AG04449 (cell line): ENCODE measurements at regions of chr5 and their contacts with region 1.

Region 1: DNA sequence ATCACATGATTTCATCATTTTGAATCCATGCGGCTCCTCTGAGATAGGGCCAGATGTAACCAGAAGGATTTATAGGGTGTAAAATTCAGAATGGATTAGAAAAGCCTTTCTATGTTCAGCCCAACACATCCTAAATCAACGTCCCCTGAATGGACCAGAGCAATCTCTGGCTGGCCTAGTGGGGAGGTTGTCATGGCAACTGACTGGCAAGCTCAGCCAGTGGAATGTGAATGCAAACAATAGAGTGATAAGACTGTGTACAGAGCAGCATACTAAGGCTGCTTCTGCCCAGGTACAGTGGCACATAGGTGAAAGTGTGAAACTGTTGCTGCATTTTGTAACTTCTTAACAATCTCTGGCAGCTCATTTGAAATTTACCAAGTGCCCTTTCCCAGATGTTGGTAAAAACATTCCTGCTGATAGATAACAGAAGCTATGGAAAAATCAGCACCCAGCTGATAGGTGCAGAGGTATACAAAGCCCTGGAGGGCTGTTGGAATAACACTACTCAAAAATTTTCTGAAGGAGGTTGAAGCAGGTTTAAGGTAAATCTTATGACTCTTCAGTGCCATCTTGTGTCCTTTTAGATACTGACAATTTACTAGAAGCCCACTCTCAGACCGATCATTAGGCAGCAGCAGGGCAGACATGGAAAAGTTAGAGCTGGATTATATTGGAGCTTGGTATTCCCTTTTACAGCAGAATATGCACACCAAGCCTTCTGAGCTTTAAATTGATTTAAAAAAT is 267.2 kb downstream of the RAB3C start:
- DNase-seq: no peak
- H3K4me3 ChIP-seq: no peak overlapping the region
- CTCF ChIP-seq: peak; percentile 33

Region 2: DNA sequence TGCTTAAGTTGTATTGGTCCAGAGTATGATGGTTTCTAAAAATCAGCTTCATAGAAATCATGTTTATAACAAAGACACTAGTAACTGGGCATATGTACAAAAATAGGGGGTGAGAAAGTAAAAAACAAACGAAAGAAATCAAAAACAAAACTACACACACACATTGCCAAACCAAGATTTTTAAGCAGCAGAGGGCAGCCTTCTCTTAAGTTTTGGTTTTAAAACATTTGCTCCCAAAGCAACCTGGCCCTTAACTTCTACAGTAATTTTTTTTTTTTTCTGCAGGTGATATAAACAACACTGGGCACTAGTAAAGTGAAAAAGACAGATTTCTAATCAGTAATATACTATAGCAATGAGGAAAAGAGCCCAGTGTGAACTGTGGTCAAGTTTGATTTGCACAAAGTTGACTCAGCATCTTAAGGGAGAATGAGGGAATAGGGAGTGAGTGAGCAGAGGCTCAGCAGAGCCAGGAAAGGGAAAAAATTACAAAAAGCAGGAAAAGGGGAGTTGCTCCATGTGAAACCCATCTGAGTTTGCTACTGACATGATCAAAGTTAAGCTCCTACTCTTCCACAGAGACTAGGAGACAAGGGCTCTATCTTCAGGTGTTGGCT is 372.2 kb before region 1 on chr5:
- CTCF ChIA-PET with region 1: interaction called, 31 read pairs
- POLR2A ChIA-PET with region 1: no interaction called
- DNase-seq: no peak
- H3K4me3 ChIP-seq: no peak overlapping the region
- CTCF ChIP-seq: no peak

Region 3: DNA sequence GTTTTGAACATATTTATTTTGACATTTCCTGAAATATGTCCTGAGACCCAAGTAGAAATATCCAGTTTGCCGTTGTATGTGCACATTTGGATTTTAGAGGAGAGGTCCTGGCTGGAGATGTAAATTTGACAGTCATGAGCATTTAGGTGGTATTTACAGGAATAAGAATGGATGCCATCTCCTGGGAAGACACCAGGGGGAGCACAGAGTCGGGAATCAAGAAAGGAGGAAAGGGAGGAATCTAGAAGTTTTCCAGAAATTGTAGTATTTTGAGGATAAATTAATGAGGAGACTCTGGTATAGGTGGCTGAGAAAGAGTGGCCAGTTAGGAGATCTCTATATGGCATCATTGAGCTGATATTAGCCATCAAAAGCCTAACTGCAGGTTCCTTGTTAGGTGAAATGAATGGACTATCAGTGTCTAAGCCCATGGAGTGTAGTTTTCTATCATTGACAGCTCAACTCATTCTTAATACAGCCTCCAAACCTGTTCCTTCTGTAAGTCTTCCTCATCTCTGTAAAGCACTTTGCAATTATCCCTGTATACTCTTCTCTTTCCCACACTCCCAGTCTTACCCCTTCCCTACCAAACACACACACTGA is 351.7 kb before region 1 on chr5:
- CTCF ChIA-PET with region 1: interaction called, 202 read pairs
- POLR2A ChIA-PET with region 1: no interaction called
- DNase-seq: no peak
- H3K4me3 ChIP-seq: no peak overlapping the region
- CTCF ChIP-seq: peak; percentile 75

Region 4: DNA sequence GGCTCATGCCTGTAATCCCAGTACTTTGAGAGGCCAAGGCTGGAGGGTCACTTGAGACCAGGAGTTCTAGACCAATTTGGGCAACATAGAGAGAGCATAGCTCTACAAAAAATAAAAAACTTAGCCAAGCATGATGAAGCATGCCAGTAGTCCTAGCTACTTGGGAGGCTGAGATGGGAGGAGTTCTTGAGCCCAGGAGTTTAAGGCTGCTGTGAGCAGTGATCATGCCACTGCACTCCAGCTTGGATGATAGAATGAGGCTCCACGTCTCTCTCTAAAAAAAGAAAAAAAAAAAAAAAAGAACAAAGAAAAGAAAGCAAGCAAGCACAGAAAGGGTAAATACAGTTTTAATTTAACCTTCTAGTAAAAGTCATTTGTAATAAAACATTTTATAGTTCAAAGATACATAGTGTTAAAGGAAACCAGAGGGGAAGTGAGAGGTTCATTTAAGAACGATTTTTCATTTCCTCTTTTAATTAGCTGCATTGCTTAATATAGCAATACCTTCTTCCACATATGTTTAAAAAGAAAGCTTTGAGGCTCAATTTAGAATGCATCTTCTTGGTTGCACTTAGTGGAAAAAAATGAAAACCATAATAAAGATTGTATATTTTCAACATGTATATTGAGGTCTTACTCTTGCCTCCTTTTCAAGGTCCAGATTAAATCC is 344.0 kb before region 1 on chr5:
- CTCF ChIA-PET with region 1: interaction called, 202 read pairs
- POLR2A ChIA-PET with region 1: no interaction called
- DNase-seq: no peak
- H3K4me3 ChIP-seq: no peak overlapping the region
- CTCF ChIP-seq: no peak

Region 5: GRCh38 chr5:58860680-58861079 is 10.6 kb after region 1 on chr5:
- CTCF ChIA-PET with region 1: interaction called, 10 read pairs
- POLR2A ChIA-PET with region 1: no interaction called
- DNase-seq: no peak
- H3K4me3 ChIP-seq: no peak overlapping the region
- CTCF ChIP-seq: no peak

Region 6: DNA sequence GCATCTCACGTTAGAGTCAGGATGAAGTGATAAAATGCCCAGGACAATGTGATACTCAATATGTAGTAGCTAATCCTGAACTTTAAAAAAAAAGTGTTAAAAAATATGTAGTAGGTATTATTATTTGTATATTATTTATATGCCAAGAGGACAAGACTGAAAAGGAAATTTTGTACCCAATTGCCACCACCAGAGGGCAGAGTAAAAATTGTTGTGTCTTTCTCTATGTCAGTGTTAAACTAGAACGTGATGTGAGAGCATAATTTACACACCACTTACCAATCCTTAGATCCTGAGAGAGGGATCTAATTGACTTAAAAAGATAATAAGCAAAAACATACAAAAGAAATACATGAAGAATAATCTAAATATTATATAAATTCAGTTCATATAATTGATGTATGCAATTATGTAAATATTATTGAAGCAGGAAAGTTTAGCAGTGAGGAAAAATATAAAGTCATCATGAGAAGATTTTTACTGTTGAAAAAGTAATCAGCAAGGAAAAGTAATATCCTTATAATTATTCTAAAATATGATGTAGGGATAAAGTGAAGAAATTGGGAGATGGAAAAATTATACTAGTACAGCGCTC is 21.7 kb after region 1 on chr5:
- CTCF ChIA-PET with region 1: interaction called, 13 read pairs
- POLR2A ChIA-PET with region 1: no interaction called
- DNase-seq: no peak
- H3K4me3 ChIP-seq: no peak overlapping the region
- CTCF ChIP-seq: peak; percentile 61

Region 7: GRCh38 chr5:58898538-58898937 is 48.4 kb after region 1 on chr5:
- CTCF ChIA-PET with region 1: no interaction called
- POLR2A ChIA-PET with region 1: no interaction called
- DNase-seq: no peak
- H3K4me3 ChIP-seq: no peak overlapping the region
- CTCF ChIP-seq: no peak